Spleen (tissue), 13 donors: ENCODE measurements at regions of chr2 and their contacts with region 1.

Region 1: DNA sequence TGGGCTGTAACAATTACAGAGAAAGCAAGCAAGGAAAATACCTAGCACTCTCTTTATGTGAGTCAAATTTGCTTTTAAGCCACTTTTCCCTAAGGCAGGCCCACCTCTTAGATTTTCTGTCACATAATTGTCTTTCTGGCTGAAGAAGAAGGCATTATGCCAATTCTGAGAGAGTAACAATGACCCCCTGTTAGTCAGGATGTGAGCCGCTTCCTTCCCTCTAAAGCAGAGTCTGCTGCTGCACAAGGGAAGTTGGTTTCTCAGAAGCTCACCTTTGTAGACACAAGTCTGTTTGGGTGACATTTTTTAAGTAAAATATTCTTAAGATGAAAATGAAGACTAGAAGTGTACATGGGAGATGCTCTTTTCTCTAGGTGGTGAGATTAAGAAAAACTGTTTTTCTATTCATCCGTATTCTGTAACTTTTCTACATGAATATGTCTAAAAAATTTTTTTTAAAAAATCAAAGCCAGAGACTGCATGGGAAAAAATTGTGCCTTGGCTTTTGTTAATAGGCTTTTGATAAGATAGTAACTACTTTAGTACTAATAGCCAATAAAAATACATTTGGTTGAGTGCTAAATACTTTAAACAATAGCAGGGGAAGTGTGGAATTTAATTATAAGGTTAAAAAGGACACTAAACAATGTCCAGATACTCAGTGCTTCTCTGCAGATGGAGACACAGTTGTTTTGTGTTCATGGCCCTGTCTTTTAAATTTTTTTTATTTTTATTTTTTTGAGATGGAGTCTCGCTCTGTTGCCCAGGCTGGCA is 33.4 kb upstream of the VPS54 start:
- DNase-seq: no peak
- H3K4me3 ChIP-seq: no peak overlapping the region
- H3K27ac ChIP-seq: peak overlapping the region in 5 of 8 donors; percentile 6 to 42 (median 17)
- H3K4me1 ChIP-seq: peaks cover 8 to 32% (median 19%) of the 10 kb centered on the region in 6 donors
- H3K27me3 ChIP-seq: no peaks in the 10 kb centered on the region
- CTCF ChIP-seq: no peak
- POLR2A ChIP-seq: no peak

Region 2: DNA sequence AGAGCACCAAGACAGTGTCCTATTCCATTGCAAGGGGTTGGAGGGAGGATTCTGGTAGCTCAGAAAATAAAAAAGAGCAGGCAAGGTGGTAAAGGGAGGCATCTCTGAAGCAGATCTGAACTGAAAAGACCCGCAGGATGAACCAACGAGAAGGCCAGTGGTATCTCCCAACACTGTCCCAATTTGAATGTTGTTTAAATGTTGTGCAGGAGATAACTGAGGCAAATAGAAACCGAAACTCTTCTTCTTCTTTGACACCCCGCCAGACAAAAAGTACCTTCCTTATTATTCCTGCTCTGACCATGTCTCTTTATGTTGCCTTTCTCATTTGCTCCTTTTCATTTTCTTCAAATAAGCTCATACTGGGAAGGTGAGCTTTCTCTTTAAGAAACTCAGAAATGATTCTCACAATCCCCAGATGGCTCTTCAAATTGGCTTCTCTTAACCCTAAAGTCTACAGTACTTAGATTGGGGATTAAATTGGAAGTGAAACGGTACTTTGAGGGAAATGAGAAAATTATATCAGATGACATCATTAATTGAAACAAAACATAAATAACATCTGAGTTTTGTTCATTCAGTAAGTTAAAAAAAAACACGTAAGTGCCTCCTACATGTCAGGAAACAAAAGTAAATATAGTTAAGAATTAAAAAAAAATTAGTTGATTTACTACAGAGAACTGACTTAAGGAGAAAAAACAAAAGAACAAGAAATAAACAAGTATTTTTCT is 607.9 kb before region 1 on chr2:
- intact Hi-C with region 1: no loop called
- DNase-seq: no peak
- H3K4me3 ChIP-seq: no peak overlapping the region
- H3K27ac ChIP-seq: no peak overlapping the region
- H3K4me1 ChIP-seq: no peaks in the 10 kb centered on the region
- H3K27me3 ChIP-seq: no peaks in the 10 kb centered on the region
- CTCF ChIP-seq: no peak
- POLR2A ChIP-seq: no peak

Region 3: DNA sequence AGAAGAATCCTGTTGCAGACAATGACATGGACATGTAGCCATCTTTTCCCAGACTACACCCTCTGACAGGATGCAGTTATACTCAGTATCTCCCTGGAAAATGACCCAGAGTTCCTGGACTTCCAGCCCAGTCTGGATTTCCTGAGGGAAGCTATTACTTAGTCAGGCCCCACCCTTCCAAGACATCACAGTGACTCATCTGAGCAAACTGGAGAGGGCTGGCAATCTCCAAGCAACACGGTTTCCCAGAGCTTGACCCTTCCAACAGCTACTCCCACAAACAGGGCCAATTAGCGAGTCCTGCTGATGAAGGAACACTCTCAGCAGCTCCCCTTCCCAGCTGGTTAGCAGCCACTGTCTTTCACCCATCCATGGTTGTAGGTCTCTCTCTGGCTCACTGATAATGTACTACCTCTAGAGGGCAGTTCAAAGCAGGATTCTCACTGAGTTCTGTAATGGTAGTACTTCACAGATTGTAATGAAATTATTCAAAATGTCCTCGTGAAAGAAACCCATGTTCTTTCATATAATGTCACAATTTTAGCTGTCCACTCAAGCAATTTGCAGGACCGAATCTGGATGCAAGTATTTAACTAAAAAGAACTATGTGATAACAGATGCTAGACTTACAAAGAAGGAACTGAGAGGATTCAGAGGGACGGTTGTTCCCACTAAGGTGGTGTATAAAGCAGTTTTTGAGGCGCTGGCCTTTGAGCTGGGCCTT is 353.7 kb before region 1 on chr2:
- intact Hi-C with region 1: no loop called
- DNase-seq: no peak
- H3K4me3 ChIP-seq: no peak overlapping the region
- H3K27ac ChIP-seq: peak overlapping the region in 1 of 8 donors; percentile 42
- H3K4me1 ChIP-seq: peaks cover 0 to 14% (median 3%) of the 10 kb centered on the region in 6 donors
- H3K27me3 ChIP-seq: no peaks in the 10 kb centered on the region
- CTCF ChIP-seq: peak in 7 of 11 experiments; percentile 26 to 60 (median 45)
- POLR2A ChIP-seq: no peak

Region 4: GRCh38 chr2:64144057-64145013 is 91.7 kb after region 1 on chr2 and contains the start of gene PELI1:
- intact Hi-C with region 1: loop called (anchors 5 kb)
- DNase-seq: peak; percentile 98
- H3K4me3 ChIP-seq: peak within 1 kb of the TSS; percentile 64 to 88 (median 80)
- H3K27ac ChIP-seq: peak within 1 kb of the TSS; percentile 97 to 100 (median 98)
- H3K4me1 ChIP-seq: peaks cover 20 to 48% (median 35%) of the 10 kb centered on the region in 6 donors
- H3K27me3 ChIP-seq: no peaks in the 10 kb centered on the region
- CTCF ChIP-seq: peak in 6 of 11 experiments; percentile 18 to 49 (median 32)
- POLR2A ChIP-seq: peak; percentile 97 to 99 (median 98)
- total RNA-seq, gene PELI1: 52.5 to 70.1 (median 59.3) TPM

Region 5: GRCh38 chr2:64330281-64331113 is 277.8 kb after region 1 on chr2:
- intact Hi-C with region 1: loop called (anchors 2 kb)
- DNase-seq: peak; percentile 89
- H3K4me3 ChIP-seq: peak overlapping the region in 1 of 8 donors; percentile 34
- H3K27ac ChIP-seq: peak overlapping the region in 6 of 8 donors; percentile 6 to 40 (median 36)
- H3K4me1 ChIP-seq: peaks cover 20 to 59% (median 52%) of the 10 kb centered on the region in 6 donors
- H3K27me3 ChIP-seq: no peaks in the 10 kb centered on the region
- CTCF ChIP-seq: peak; percentile 88 to 96 (median 94)
- POLR2A ChIP-seq: no peak

Region 6: DNA sequence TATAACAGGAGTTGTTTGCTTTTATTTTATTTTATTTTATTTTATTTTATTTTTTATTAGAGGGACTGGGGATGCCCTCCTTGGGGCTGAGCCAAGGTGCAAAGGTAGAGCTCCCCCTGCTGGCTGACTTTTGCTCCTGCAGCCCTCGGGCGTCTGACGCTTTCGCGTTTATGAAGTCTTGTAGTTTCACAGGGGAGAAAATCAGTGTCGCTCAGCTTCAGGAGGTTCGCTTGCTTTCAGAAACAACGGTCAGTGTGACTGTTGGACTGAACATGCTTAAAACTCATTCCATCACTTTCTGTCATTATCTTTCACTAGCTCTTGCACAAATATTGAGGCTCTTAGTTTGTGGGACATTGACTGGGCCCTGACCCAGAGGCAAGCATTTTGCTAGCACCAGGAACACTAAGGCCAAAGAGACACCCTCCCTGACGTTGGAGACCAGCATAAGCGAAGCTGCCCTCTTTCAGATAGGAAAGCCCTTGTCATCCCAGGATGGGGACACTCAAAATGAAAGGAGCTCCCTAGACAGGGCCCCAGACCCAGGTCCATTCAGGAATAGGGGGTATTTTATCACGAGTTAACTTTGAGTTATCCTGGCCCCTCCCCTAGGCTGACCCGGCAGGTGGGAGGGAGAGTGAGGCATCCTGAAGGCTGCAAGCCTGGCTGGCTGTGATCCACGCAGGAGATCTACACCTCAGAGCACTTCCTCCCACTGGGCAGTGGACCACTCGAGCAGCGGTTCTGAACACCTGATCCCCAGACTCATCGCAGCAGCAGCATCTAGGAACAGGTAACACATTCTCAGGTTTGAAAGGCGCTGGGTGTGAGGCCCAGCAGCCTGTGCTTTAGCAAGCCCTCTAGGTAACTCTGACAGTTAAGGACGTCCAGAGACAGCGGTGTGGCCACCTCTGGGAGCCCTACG is 435.7 kb after region 1 on chr2:
- intact Hi-C with region 1: loop called (anchors 5 kb)
- DNase-seq: peak; percentile 92
- H3K4me3 ChIP-seq: no peak overlapping the region
- H3K27ac ChIP-seq: no peak overlapping the region
- H3K4me1 ChIP-seq: peaks cover 4 to 27% (median 14%) of the 10 kb centered on the region in 6 donors
- H3K27me3 ChIP-seq: no peaks in the 10 kb centered on the region
- CTCF ChIP-seq: peak; percentile 85 to 99 (median 97)
- POLR2A ChIP-seq: no peak